Activated CD4-positive, alpha-beta T cell treated with anti-CD3 and anti-CD28 coated beads, Interleukin-2, amount 10 ng/mL, durations not matched to agents 24 days and 14 days (primary cell): ENCODE measurements at regions of chr1 and their contacts with region 1.

Region 1: GRCh38 chr1:161766102-161766981 is at the start of gene ATF6:
- DNase-seq: peak; percentile 95
- H3K4me3 Mint-ChIP-seq: peak within 1 kb of the TSS; percentile 95
- H3K27ac Mint-ChIP-seq: peak within 1 kb of the TSS; percentile 98
- H3K4me1 Mint-ChIP-seq: peaks cover 45% of the 10 kb centered on the region
- H3K27me3 Mint-ChIP-seq: no peaks in the 10 kb centered on the region
- total RNA-seq, gene ATF6: 23.6 and 27.7 TPM in 2 replicates

Region 2: DNA sequence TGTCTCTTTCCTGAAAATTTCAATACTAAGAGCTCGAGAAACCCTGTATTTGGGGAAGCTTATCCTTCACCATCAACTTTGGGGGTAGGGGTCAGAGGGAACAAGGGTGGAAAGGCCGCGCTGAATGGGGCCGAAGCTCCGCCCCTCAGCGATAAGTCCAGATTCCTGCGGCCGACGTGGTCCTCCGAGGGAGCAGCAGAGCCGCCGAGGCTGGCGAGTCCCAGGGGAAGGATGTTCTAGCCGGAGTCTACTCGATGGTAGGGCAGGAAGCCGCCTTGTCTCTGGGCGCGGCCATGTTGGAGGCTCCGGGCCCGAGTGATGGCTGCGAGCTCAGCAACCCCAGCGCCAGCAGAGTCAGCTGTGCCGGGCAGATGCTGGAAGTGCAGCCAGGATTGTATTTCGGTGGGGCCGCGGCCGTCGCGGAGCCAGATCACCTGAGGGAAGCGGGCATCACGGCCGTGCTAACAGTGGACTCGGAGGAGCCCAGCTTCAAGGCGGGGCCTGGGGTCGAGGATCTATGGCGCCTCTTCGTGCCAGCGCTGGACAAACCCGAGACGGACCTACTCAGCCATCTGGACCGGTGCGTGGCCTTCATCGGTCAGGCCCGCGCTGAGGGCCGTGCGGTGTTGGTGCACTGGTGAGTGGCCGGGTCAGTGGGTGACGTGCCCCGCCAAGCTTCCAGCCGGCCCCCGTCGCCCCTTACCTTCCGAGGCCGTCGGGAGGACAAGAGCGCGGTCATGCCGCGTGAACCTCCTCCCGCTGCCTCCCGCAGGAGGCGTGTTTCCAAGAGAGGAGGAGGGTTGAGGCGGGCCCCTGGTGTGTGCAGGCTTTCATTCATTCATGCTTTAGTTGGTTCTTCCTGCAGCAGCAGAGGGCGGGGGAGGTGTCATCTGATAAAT is 16.6 kb before region 1 on chr1 and contains the start of gene DUSP12:
- intact Hi-C with region 1: loop called (anchors 1 kb)
- DNase-seq: peak; percentile 95
- H3K4me3 Mint-ChIP-seq: peak within 1 kb of the TSS; percentile 99
- H3K27ac Mint-ChIP-seq: peak within 1 kb of the TSS; percentile 100
- H3K4me1 Mint-ChIP-seq: peaks cover 31% of the 10 kb centered on the region
- H3K27me3 Mint-ChIP-seq: peaks cover 17% of the 10 kb centered on the region
- total RNA-seq, gene DUSP12: 38.2 and 39.7 TPM in 2 replicates

Region 3: GRCh38 chr1:161792740-161793139 is 26.4 kb after region 1 on chr1:
- intact Hi-C with region 1: loop called (anchors 2 kb)
- DNase-seq: peak; percentile 73
- H3K4me3 Mint-ChIP-seq: no peak overlapping the region
- H3K27ac Mint-ChIP-seq: peak overlapping the region; percentile 10
- H3K4me1 Mint-ChIP-seq: peaks cover 23% of the 10 kb centered on the region
- H3K27me3 Mint-ChIP-seq: no peaks in the 10 kb centered on the region

Region 4: DNA sequence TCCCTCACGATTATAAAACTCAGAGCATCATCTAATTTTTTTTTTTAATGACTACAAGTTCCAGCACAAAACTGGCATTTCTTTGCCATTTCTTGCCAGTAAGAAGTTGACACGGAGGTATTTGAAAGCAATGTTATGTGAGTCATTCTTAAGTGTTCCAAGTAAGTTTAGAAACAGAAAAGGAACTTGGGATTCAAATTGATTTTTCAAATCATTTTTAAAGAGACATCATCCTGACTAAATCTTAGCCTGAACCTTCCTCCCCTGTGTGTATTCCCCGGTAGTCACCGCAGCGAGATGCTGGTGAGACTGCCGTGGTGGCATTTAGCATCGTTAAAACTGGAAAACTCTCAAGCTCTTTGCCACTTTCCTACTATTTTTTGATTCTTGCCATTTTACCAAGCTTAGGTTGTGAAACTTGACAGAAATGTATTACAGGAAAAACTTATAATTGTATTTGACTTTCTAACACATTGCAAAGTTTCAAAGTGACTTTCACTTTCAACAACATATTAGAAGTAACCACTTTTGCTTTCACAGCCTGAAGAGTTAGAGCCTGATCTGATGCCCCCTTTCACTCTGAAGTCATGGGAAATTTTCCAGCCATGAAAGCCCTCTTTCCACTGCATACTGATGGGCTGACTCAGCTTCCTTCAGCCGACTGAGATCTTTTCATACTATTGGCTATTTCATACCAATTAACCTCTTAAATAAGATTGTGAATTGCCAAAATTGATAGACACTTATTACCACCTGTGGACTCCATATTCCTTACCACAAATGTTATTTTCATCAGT is 195.9 kb after region 1 on chr1:
- intact Hi-C with region 1: loop called (anchors 2 kb)
- DNase-seq: peak; percentile 80
- H3K4me3 Mint-ChIP-seq: peak overlapping the region; percentile 85
- H3K27ac Mint-ChIP-seq: peak overlapping the region; percentile 88
- H3K4me1 Mint-ChIP-seq: peaks cover 25% of the 10 kb centered on the region
- H3K27me3 Mint-ChIP-seq: no peaks in the 10 kb centered on the region

Region 5: GRCh38 chr1:162035241-162035640 is 268.9 kb after region 1 on chr1:
- intact Hi-C with region 1: loop called (anchors 2 kb)
- DNase-seq: no peak
- H3K4me3 Mint-ChIP-seq: no peak overlapping the region
- H3K27ac Mint-ChIP-seq: no peak overlapping the region
- H3K4me1 Mint-ChIP-seq: peaks cover 5% of the 10 kb centered on the region
- H3K27me3 Mint-ChIP-seq: peaks cover 33% of the 10 kb centered on the region

Region 6: DNA sequence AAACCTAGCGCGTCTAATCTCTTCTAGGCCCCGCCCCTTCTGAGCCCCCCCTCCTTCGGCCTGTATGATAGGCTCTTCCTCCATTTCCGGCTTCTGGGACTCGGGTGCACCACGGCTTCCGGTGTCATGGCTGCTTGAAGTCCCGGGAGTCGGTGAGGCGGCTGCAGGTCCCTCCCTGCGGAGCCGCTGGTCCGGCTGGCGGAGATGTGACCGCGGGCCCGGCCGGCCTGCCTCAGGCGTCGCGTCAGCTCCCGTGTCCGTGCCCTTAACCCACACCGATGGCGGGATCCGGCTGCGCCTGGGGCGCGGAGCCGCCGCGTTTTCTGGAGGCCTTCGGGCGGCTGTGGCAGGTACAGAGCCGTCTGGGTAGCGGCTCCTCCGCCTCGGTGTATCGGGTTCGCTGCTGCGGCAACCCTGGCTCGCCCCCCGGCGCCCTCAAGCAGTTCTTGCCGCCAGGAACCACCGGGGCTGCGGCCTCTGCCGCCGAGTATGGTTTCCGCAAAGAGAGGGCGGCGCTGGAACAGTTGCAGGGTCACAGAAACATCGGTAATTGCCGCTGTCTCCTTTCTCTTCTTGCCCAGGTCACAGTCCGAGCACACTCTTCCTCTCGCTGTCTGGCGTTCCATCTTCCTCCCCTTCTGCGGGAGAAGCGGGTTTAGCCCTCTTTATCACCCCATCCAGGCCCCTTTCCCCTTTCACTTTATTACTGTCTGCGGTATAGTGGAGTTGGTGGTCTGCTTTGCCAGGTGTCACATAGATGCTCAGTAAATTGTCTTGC is 731.6 kb after region 1 on chr1 and contains the start of gene UHMK1:
- intact Hi-C with region 1: loop called (anchors 5 kb)
- DNase-seq: peak; percentile 96
- H3K4me3 Mint-ChIP-seq: peak within 1 kb of the TSS; percentile 86
- H3K27ac Mint-ChIP-seq: peak within 1 kb of the TSS; percentile 88
- H3K4me1 Mint-ChIP-seq: peaks cover 28% of the 10 kb centered on the region
- H3K27me3 Mint-ChIP-seq: peaks cover 3% of the 10 kb centered on the region
- total RNA-seq, gene UHMK1: 59.8 and 60.1 TPM in 2 replicates